Thyroid gland (tissue), 4 donors: ENCODE measurements at regions of chr13 and their contacts with region 1.

Region 1: GRCh38 chr13:113153810-113154748 is 4.4 kb upstream of the PROZ start:
- DNase-seq: peak; percentile 76 to 81
- H3K4me3 ChIP-seq: peak overlapping the region in 2 of 3 donors; percentile 35 to 47
- H3K27ac ChIP-seq: peak overlapping the region; percentile 30 to 85 (median 38)
- H3K4me1 ChIP-seq: peaks cover 10 to 16% of the 10 kb centered on the region in 2 donors
- H3K27me3 ChIP-seq: no peaks in the 10 kb centered on the region
- CTCF ChIP-seq: no peak
- POLR2A ChIP-seq: peak in 1 of 2 donors; percentile 75

Region 2: GRCh38 chr13:112669881-112670499 is 484.1 kb before region 1 on chr13:
- intact Hi-C with region 1: no loop called
- DNase-seq: no peak
- H3K4me3 ChIP-seq: no peak overlapping the region
- H3K27ac ChIP-seq: no peak overlapping the region
- H3K4me1 ChIP-seq: no peaks in the 10 kb centered on the region
- H3K27me3 ChIP-seq: no peaks in the 10 kb centered on the region
- CTCF ChIP-seq: no peak
- POLR2A ChIP-seq: no peak

Region 3: DNA sequence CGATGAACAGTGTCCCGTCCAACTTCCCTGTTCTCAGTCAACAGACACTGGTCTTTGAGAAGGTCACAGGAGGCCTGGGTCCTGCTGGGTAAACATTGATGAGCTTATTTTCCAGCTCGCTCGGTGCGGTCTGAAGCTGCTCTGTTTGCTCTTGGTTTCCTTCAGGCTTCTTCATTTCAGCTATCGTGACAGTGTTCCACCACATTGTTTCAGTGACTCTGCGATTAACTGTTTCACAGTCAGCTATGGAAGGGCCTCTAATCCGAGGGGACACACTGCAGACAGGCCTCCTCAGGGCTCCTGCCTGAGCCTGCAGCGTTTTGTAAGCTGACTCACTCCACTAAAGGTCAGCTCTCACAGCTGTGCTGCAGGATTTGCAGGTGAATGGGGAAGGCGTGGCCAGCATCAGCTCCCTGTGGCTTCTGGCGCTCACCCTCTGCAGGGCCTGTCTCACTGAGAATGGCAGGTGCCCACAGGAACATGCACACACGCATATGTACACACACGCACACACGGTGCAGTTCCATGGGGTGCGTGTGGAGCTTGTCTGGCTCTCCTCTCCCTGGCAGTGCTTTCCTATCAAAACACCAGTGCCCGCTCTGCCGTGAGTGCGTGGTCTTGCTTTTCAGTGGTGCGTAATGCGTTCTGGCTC is 248.0 kb before region 1 on chr13:
- intact Hi-C with region 1: no loop called
- DNase-seq: no peak
- H3K4me3 ChIP-seq: no peak overlapping the region
- H3K27ac ChIP-seq: no peak overlapping the region
- H3K4me1 ChIP-seq: peaks cover 39 to 41% of the 10 kb centered on the region in 2 donors
- H3K27me3 ChIP-seq: no peaks in the 10 kb centered on the region
- CTCF ChIP-seq: no peak
- POLR2A ChIP-seq: no peak

Region 4: GRCh38 chr13:113208424-113209335 is 54.6 kb after region 1 on chr13 and contains the start of gene PCID2:
- intact Hi-C with region 1: loop called (anchors 5 kb)
- DNase-seq: peak; percentile 84 to 87
- H3K4me3 ChIP-seq: peak within 1 kb of the TSS; percentile 89 to 97 (median 94)
- H3K27ac ChIP-seq: peak within 1 kb of the TSS; percentile 90 to 99 (median 98)
- H3K4me1 ChIP-seq: peaks cover 24 to 31% of the 10 kb centered on the region in 2 donors
- H3K27me3 ChIP-seq: no peaks in the 10 kb centered on the region
- CTCF ChIP-seq: no peak
- POLR2A ChIP-seq: peak in 1 of 2 donors; percentile 85
- total RNA-seq, gene PCID2: 50.5 to 75.6 (median 56.5) TPM

Region 5: DNA sequence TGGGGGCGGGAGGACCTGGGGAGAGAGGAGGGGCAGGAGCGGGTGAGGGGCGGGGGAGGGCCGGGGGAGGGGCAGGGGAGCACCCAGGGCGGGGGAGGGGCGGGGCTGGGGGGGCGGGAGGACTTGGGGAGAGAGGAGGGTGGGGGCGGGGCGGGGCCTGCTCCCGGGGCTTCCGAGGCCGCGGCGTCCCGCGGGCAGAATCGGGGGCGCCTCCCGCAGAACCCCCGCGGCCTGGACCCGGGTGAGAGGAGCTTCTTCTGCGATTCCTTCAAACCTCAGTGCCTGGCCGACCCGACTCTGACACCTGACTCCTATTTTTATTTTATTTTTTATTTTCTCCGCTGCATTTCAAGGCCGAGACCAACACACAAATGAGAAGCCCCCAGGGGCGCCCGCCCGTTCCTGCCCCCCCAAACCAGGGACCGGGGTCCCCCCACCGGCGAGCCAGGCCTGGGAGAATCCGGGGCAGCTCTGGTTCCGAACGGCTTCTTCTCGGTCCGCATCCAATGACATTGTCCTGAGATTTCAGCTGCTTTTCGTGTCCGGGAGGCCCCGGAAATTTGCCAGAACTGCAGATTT is 210.3 kb after region 1 on chr13:
- intact Hi-C with region 1: loop called (anchors 10 kb)
- DNase-seq: peak in 1 of 2 donors; percentile 16
- H3K4me3 ChIP-seq: peak overlapping the region in 1 of 3 donors; percentile 23
- H3K27ac ChIP-seq: peak overlapping the region; percentile 17 to 78 (median 48)
- H3K4me1 ChIP-seq: peaks cover 7 to 10% of the 10 kb centered on the region in 2 donors
- H3K27me3 ChIP-seq: no peaks in the 10 kb centered on the region
- CTCF ChIP-seq: no peak
- POLR2A ChIP-seq: no peak